CD14-positive monocyte (primary cell): ENCODE measurements at regions of chr19 and their contacts with region 1.

Region 1: GRCh38 chr19:8832132-8833021 is at the starts of genes MBD3L1 and ZNF558:
- DNase-seq: peak; percentile 98 to 99 (median 98)
- H3K4me3 ChIP-seq: peak within 1 kb of the TSS; percentile 65 to 92 (median 82)
- H3K4me3 Mint-ChIP-seq: peak within 1 kb of the TSS; percentile 85 to 91
- H3K27ac ChIP-seq: peak within 1 kb of the TSS; percentile 80 to 91
- H3K27ac Mint-ChIP-seq: peak within 1 kb of the TSS; percentile 86 to 96 (median 94)
- H3K4me1 ChIP-seq: peaks cover 11 to 18% of the 10 kb centered on the region in 2 donors
- H3K4me1 Mint-ChIP-seq: peaks cover 16% of the 10 kb centered on the region
- H3K27me3 ChIP-seq: no peaks in the 10 kb centered on the region
- H3K27me3 Mint-ChIP-seq: peaks cover 2 to 3% (median 3%) of the 10 kb centered on the region in 3 donors
- CTCF ChIP-seq: peak; percentile 46
- polyA plus RNA-seq, gene MBD3L1: not detected
- polyA plus RNA-seq, gene ZNF558: 3.7 to 22.1 (median 5.6) TPM

Region 2: DNA sequence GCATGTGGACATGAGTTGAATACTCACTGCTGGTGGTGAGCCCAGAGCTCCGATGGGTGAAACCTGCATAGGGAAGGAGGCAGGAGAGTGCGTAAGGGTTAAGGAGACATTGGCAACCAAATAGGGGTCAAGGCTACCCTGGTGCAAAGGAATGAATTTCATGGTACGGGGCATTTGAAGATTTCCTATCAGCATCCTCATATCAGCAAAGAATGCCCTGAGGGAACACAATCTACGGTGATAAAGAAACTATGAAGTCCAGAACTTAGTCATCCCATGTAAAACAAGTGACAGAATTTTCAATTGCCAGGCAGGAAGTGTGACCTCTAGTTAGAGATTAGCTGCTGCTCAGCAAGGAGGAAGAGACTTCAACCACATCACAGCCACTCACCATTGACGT is 64.7 kb after region 1 on chr19:
- intact Hi-C with region 1: no loop called
- DNase-seq: no peak
- H3K4me3 ChIP-seq: no peak overlapping the region
- H3K4me3 Mint-ChIP-seq: no peak overlapping the region
- H3K27ac ChIP-seq: no peak overlapping the region
- H3K27ac Mint-ChIP-seq: no peak overlapping the region
- H3K4me1 ChIP-seq: no peaks in the 10 kb centered on the region
- H3K4me1 Mint-ChIP-seq: no peaks in the 10 kb centered on the region
- H3K27me3 ChIP-seq: no peaks in the 10 kb centered on the region
- H3K27me3 Mint-ChIP-seq: no peaks in the 10 kb centered on the region
- CTCF ChIP-seq: no peak

Region 3: GRCh38 chr19:9018163-9018875 is 185.9 kb after region 1 on chr19:
- intact Hi-C with region 1: no loop called
- DNase-seq: no peak
- H3K4me3 ChIP-seq: no peak overlapping the region
- H3K4me3 Mint-ChIP-seq: no peak overlapping the region
- H3K27ac ChIP-seq: no peak overlapping the region
- H3K27ac Mint-ChIP-seq: no peak overlapping the region
- H3K4me1 ChIP-seq: no peaks in the 10 kb centered on the region
- H3K4me1 Mint-ChIP-seq: no peaks in the 10 kb centered on the region
- H3K27me3 ChIP-seq: no peaks in the 10 kb centered on the region
- H3K27me3 Mint-ChIP-seq: peaks cover 2 to 13% (median 5%) of the 10 kb centered on the region in 3 donors
- CTCF ChIP-seq: no peak

Region 4: GRCh38 chr19:9323919-9324583 is 491.7 kb after region 1 on chr19 and contains the start of gene ZNF559:
- intact Hi-C with region 1: loop called in 1 of 2 experiments (anchors 5 kb)
- DNase-seq: peak; percentile 93 to 95 (median 93)
- H3K4me3 ChIP-seq: peak within 1 kb of the TSS; percentile 73 to 90 (median 89)
- H3K4me3 Mint-ChIP-seq: peak within 1 kb of the TSS; percentile 92 to 98
- H3K27ac ChIP-seq: peak within 1 kb of the TSS; percentile 82 to 89
- H3K27ac Mint-ChIP-seq: peak within 1 kb of the TSS; percentile 89 to 96 (median 94)
- H3K4me1 ChIP-seq: peaks cover 14 to 20% of the 10 kb centered on the region in 2 donors
- H3K4me1 Mint-ChIP-seq: peaks cover 10% of the 10 kb centered on the region
- H3K27me3 ChIP-seq: no peaks in the 10 kb centered on the region
- H3K27me3 Mint-ChIP-seq: peaks cover 0 to 3% (median 2%) of the 10 kb centered on the region in 3 donors
- CTCF ChIP-seq: peak; percentile 37
- polyA plus RNA-seq, gene ZNF559: 9.0 to 16.0 (median 9.1) TPM

Region 5: DNA sequence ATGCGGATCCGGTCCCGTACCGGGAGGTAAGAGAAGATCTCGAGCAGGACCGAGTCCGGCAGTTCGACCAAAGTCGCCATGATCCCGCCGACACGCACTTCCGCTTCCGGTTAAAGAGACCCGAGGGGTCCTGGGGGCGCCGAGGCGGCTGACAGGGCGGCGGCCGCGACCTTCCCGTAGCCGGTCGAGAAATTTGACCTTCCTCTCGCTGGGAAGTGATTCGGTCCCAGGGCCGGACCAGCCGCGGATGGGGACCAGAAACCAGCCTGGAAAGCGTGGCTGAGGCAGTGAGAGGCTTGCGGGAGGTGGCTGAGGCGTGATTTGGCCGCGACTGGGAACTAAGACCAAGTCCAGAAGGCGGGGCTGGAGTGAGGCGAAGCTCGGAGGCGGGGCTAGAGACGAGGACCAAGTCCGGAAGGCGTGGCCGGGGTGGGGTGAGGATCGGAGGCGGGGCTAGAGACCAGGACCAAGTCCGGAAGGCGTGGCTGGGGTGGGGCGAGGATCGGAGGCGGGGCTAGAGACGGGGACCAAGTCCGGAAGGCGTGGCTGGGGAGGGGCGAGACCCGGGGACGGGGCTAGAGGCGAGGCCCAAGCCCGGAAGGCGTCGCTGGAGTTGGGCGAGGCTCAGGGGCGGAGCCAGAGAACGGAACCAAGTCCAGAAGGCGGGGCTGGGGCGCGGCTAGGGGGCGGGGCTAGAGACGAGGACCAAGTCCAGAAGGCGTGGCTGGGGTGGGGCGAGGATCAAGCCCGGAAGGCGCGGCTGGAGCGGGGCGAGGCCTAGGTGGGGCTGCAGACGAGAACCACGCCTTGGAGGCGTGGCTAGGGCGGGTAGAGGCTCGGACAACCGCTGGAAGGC is 986.6 kb after region 1 on chr19 and contains the start of gene FBXL12:
- intact Hi-C with region 1: loop called in 1 of 2 experiments (anchors 2 kb)
- DNase-seq: peak; percentile 100
- H3K4me3 ChIP-seq: peak within 1 kb of the TSS; percentile 82 to 99 (median 92)
- H3K4me3 Mint-ChIP-seq: peak within 1 kb of the TSS; percentile 87 to 92
- H3K27ac ChIP-seq: peak within 1 kb of the TSS; percentile 96 to 99
- H3K27ac Mint-ChIP-seq: peak within 1 kb of the TSS; percentile 96 to 98 (median 97)
- H3K4me1 ChIP-seq: peaks cover 15 to 22% of the 10 kb centered on the region in 2 donors
- H3K4me1 Mint-ChIP-seq: peaks cover 20% of the 10 kb centered on the region
- H3K27me3 ChIP-seq: no peaks in the 10 kb centered on the region
- H3K27me3 Mint-ChIP-seq: no peaks in the 10 kb centered on the region
- CTCF ChIP-seq: no peak
- polyA plus RNA-seq, gene FBXL12: 6.6 to 49.8 (median 8.1) TPM

Region 6: DNA sequence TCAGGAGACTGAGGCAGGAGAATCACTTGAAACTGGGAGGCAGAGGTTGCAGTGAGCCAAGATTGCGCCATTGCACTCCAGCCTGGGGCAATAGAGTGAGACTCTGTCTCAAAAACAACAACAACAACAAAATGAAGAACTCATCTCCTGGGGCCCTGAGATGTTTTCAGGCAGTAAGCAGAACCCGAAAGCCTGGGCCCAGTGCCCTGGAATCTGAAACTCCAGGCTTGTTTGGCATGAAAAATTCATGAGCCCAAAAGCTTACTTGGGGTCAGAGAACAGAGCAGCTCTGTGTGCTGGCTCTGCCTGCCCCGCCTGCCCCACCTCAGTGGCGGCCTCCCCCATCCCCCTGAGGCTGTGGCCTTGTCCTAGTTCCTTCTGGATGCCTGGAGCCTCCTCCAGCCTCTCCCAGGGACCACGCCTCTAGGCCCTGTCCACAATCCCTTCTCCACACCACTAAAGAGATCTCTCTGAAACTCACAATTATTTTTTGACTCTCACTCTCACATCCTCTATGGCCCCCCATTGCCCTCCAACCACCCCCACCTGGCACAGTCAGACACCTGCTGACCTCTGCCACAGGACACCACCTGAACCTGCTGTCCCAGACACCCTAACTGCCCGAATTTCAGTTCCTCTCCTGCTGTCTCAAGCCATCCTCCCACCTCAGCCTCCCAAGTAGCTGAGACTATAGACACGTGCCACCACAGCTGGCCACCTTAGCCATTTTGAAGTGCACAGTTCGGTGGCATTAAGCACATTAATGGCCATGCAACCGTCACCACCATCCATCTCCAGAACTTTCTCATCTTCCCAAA is 1761.7 kb after region 1 on chr19:
- intact Hi-C with region 1: loop called in 1 of 2 experiments (anchors 5 kb)
- DNase-seq: peak; percentile 31 to 56 (median 44)
- H3K4me3 ChIP-seq: no peak overlapping the region
- H3K4me3 Mint-ChIP-seq: peak overlapping the region; percentile 12 to 37
- H3K27ac ChIP-seq: peak overlapping the region; percentile 64 to 75
- H3K27ac Mint-ChIP-seq: peak overlapping the region; percentile 66 to 94 (median 84)
- H3K4me1 ChIP-seq: peaks cover 64 to 72% of the 10 kb centered on the region in 2 donors
- H3K4me1 Mint-ChIP-seq: peaks cover 65% of the 10 kb centered on the region
- H3K27me3 ChIP-seq: no peaks in the 10 kb centered on the region
- H3K27me3 Mint-ChIP-seq: peaks cover 0 to 3% (median 1%) of the 10 kb centered on the region in 3 donors
- CTCF ChIP-seq: no peak